ENCODE measurements at regions of chr5 and their contacts with region 1.

Region 1: DNA sequence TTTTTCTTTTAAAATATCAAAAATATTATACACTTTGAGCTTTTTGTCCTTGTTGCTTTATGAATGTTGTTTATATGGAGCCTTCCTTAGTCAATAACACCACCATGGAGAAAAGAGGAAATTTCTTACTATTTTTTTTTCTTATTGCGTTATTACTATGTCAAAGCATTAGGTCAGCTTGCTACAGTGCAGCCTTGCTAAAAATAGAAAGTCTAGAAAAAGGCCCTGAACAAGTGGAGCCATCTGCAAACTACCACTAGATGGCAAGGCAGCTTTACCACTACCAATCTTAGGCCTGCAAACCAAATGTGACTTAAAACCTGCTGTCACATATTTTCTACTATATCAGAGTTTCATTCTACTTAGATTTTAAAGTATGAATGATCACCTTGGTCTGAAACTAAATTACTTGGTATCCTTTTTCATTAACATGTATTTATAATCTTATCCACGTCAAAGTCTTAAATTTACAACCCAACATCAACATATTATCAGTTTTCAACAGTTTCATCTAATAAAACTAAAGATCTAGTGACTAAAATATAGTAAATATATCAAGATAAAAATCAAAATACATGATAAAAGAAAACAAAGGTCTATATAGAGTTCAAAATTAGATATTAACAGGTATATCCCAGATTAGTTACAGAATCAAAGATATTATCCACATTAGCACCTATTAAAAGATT is 113.1 kb upstream of the ACOT12 start:
- DNase-seq: peak; percentile 46
- H3K4me3 Mint-ChIP-seq: no peak overlapping the region
- H3K27ac Mint-ChIP-seq: no peak overlapping the region
- H3K4me1 Mint-ChIP-seq: no peaks in the 10 kb centered on the region
- H3K27me3 Mint-ChIP-seq: no peaks in the 10 kb centered on the region

Region 2: GRCh38 chr5:81838307-81838906 is 331.4 kb after region 1 on chr5:
- CTCF ChIA-PET with region 1: interaction called, 6 read pairs
- POLR2A ChIA-PET with region 1: no interaction called
- intact Hi-C with region 1: loop called (anchors 1 kb)
- DNase-seq: peak; percentile 29
- H3K4me3 Mint-ChIP-seq: no peak overlapping the region
- H3K27ac Mint-ChIP-seq: no peak overlapping the region
- H3K4me1 Mint-ChIP-seq: peaks cover 5% of the 10 kb centered on the region
- H3K27me3 Mint-ChIP-seq: no peaks in the 10 kb centered on the region

Region 3: GRCh38 chr5:81860778-81861177 is 353.7 kb after region 1 on chr5:
- CTCF ChIA-PET with region 1: no interaction called
- POLR2A ChIA-PET with region 1: no interaction called
- intact Hi-C with region 1: no loop called
- DNase-seq: no peak
- H3K4me3 Mint-ChIP-seq: no peak overlapping the region
- H3K27ac Mint-ChIP-seq: no peak overlapping the region
- H3K4me1 Mint-ChIP-seq: no peaks in the 10 kb centered on the region
- H3K27me3 Mint-ChIP-seq: no peaks in the 10 kb centered on the region

Region 4: DNA sequence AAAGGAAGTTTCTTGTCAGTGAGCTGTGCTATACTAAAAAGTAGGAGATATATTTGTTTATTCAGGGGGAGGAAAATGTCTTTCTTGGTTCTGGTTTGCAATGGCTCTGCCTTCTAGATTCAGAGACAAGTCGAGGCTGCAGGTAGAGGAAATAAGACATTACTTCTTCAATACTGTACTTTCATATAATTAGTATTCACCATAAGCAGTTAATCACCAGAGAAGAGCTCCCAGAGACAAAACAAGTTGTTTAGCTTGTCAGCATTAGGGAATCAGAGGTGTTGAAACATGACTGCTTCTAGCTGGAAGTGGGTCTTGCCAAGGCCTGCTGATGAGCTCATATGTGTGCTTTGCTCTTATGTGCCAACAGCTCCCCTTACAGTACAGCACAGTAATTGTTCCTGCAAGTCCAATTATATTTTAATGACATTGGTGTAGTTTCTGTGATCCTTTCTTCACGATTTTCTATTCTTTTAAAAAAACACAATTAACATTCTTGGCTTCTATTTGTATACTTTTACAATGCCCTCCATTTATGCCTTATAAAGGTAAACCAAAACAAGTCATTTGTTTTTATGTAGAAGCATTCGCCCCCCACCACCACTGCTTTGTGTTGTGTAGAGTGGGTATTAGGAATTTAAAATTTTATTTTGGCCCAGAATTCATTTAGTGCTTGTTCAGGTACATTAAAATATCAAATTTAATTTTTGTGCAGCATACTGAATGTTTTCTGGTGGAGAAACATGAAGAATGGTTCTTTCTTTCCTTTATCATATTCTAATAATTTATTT is 658.9 kb after region 1 on chr5:
- CTCF ChIA-PET with region 1: interaction called, 11 read pairs
- POLR2A ChIA-PET with region 1: no interaction called
- intact Hi-C with region 1: loop called (anchors 1 kb)
- DNase-seq: peak; percentile 30
- H3K4me3 Mint-ChIP-seq: no peak overlapping the region
- H3K27ac Mint-ChIP-seq: no peak overlapping the region
- H3K4me1 Mint-ChIP-seq: peaks cover 6% of the 10 kb centered on the region
- H3K27me3 Mint-ChIP-seq: no peaks in the 10 kb centered on the region

Region 5: GRCh38 chr5:82225525-82226172 is 718.6 kb after region 1 on chr5:
- CTCF ChIA-PET with region 1: interaction called, 9 read pairs
- POLR2A ChIA-PET with region 1: no interaction called
- intact Hi-C with region 1: loop called (anchors 1 kb)
- DNase-seq: peak; percentile 71
- H3K4me3 Mint-ChIP-seq: no peak overlapping the region
- H3K27ac Mint-ChIP-seq: no peak overlapping the region
- H3K4me1 Mint-ChIP-seq: peaks cover 2% of the 10 kb centered on the region
- H3K27me3 Mint-ChIP-seq: no peaks in the 10 kb centered on the region

Measured in activated CD4-positive, alpha-beta memory T cell treated with anti-CD3 and anti-CD28 coated beads for 36 hours (primary cell).